B cell (primary cell): ENCODE measurements at regions of chr13 and their contacts with region 1.

Region 1: DNA sequence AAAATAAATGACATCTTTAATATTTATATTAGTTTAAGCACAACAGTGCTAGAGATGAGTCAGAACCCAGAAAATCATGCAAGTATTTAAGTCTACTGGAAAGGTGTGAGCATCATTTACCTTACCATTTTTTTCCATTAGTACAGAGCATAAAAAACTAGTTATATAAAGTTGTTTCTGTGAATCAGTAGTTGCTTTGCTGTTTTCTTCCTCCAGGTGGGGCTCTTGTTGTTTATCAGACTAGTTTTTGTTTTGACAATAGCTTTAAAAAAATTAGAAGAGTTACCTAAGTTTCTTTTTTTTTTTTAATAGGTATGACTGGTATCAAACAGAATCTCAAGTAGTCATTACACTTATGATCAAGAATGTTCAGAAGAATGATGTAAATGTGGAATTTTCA is 12.7 kb downstream of the SUGT1 start:
- DNase-seq: peak; percentile 12
- ATAC-seq: peak; percentile 39
- H3K4me3 ChIP-seq: no peak overlapping the region
- H3K4me3 Mint-ChIP-seq: no peak overlapping the region
- H3K27ac ChIP-seq: no peak overlapping the region
- H3K27ac Mint-ChIP-seq: no peak overlapping the region
- H3K4me1 ChIP-seq: no peaks in the 10 kb centered on the region
- H3K4me1 Mint-ChIP-seq: no peaks in the 10 kb centered on the region
- H3K27me3 ChIP-seq: no peaks in the 10 kb centered on the region
- H3K27me3 Mint-ChIP-seq: no peaks in the 10 kb centered on the region
- CTCF ChIP-seq: peak; percentile 67

Region 2: GRCh38 chr13:52395704-52396103 is 269.6 kb before region 1 on chr13:
- CTCF ChIA-PET with region 1: no interaction called
- POLR2A ChIA-PET with region 1: no interaction called
- intact Hi-C with region 1: no loop called
- DNase-seq: no peak
- ATAC-seq: no peak
- H3K4me3 ChIP-seq: no peak overlapping the region
- H3K4me3 Mint-ChIP-seq: no peak overlapping the region
- H3K27ac ChIP-seq: no peak overlapping the region
- H3K27ac Mint-ChIP-seq: no peak overlapping the region
- H3K4me1 ChIP-seq: no peaks in the 10 kb centered on the region
- H3K4me1 Mint-ChIP-seq: no peaks in the 10 kb centered on the region
- H3K27me3 ChIP-seq: no peaks in the 10 kb centered on the region
- H3K27me3 Mint-ChIP-seq: peaks cover 17% of the 10 kb centered on the region
- CTCF ChIP-seq: no peak

Region 3: GRCh38 chr13:52809310-52809769 is 144.0 kb after region 1 on chr13:
- CTCF ChIA-PET with region 1: interaction called, 6 read pairs
- POLR2A ChIA-PET with region 1: no interaction called
- intact Hi-C with region 1: loop called (anchors 1 kb)
- DNase-seq: peak; percentile 53
- ATAC-seq: peak; percentile 24
- H3K4me3 ChIP-seq: no peak overlapping the region
- H3K4me3 Mint-ChIP-seq: no peak overlapping the region
- H3K27ac ChIP-seq: no peak overlapping the region
- H3K27ac Mint-ChIP-seq: no peak overlapping the region
- H3K4me1 ChIP-seq: no peaks in the 10 kb centered on the region
- H3K4me1 Mint-ChIP-seq: no peaks in the 10 kb centered on the region
- H3K27me3 ChIP-seq: peaks cover 0 to 3% (median 0%) of the 10 kb centered on the region in 4 experiments
- H3K27me3 Mint-ChIP-seq: peaks cover 19% of the 10 kb centered on the region
- CTCF ChIP-seq: peak; percentile 70